ENCODE measurements at regions of chr20 and their contacts with region 1.

Region 1: DNA sequence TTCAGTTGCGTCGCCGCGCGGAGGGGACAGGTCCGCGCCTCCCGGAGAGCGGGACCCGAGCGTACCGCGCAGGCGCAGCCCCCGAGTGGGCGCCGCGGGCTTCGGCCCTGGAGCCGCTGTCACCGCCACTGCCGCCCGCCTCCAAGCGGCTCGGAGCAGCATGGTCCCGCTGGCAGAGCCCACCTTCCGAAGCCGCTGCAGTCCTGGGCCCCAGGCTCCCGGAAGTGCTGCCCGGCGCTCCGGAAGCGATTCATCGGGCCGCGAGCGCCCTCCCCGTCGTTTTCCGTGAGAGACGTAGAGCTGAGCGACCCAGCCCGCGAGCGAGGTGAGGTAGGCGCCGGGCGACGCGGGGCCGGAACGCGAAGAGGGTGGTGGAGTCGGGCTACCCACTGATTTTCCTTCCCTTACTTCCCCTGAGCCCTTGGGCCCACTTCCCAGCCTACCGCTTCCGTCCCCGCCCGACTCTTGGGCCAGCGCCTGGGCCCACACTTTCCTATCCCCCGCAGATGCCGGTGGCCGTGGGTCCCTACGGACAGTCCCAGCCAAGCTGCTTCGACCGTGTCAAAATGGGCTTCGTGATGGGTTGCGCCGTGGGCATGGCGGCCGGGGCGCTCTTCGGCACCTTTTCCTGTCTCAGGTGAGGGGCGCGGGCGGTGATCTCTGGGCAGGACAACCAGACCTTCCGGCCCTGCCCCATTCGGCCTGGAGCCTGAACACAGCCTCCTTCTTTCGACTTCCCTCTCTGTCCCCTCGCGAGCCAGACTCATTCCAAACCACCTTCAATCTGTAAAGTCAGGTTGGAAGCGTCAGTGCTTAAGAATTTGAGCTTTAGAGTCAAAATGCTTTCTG is at the starts of genes NFS1 and ROMO1:
- DNase-seq: peak; percentile 89
- H3K4me3 Mint-ChIP-seq: peak within 1 kb of the TSS; percentile 93
- H3K27ac Mint-ChIP-seq: peak within 1 kb of the TSS; percentile 92
- H3K4me1 Mint-ChIP-seq: peaks cover 40% of the 10 kb centered on the region
- H3K27me3 Mint-ChIP-seq: no peaks in the 10 kb centered on the region
- total RNA-seq, gene NFS1: 33.6 to 38.1 TPM
- total RNA-seq, gene ROMO1: 120 to 134 TPM

Region 2: GRCh38 chr20:35601008-35601973 is 98.1 kb before region 1 on chr20:
- CTCF ChIA-PET with region 1: interaction called, 9 read pairs
- intact Hi-C with region 1: loop called (anchors 1 kb)
- DNase-seq: peak; percentile 91
- H3K4me3 Mint-ChIP-seq: peak overlapping the region; percentile 64
- H3K27ac Mint-ChIP-seq: no peak overlapping the region
- H3K4me1 Mint-ChIP-seq: peaks cover 7% of the 10 kb centered on the region
- H3K27me3 Mint-ChIP-seq: peaks cover 13% of the 10 kb centered on the region

Region 3: GRCh38 chr20:35711588-35712209 is 12.3 kb after region 1 on chr20:
- CTCF ChIA-PET with region 1: no interaction called
- intact Hi-C with region 1: loop called (anchors 1 kb)
- DNase-seq: no peak
- H3K4me3 Mint-ChIP-seq: no peak overlapping the region
- H3K27ac Mint-ChIP-seq: peak overlapping the region; percentile 86
- H3K4me1 Mint-ChIP-seq: peaks cover 46% of the 10 kb centered on the region
- H3K27me3 Mint-ChIP-seq: no peaks in the 10 kb centered on the region

Region 4: GRCh38 chr20:35771689-35772562 is 72.6 kb after region 1 on chr20 and contains the start of gene PHF20:
- CTCF ChIA-PET with region 1: no interaction called
- intact Hi-C with region 1: loop called (anchors 2 kb)
- DNase-seq: peak; percentile 100
- H3K4me3 Mint-ChIP-seq: peak within 1 kb of the TSS; percentile 80
- H3K27ac Mint-ChIP-seq: peak within 1 kb of the TSS; percentile 82
- H3K4me1 Mint-ChIP-seq: peaks cover 74% of the 10 kb centered on the region
- H3K27me3 Mint-ChIP-seq: no peaks in the 10 kb centered on the region
- total RNA-seq, gene PHF20: 39.8 to 46.0 TPM

Region 5: DNA sequence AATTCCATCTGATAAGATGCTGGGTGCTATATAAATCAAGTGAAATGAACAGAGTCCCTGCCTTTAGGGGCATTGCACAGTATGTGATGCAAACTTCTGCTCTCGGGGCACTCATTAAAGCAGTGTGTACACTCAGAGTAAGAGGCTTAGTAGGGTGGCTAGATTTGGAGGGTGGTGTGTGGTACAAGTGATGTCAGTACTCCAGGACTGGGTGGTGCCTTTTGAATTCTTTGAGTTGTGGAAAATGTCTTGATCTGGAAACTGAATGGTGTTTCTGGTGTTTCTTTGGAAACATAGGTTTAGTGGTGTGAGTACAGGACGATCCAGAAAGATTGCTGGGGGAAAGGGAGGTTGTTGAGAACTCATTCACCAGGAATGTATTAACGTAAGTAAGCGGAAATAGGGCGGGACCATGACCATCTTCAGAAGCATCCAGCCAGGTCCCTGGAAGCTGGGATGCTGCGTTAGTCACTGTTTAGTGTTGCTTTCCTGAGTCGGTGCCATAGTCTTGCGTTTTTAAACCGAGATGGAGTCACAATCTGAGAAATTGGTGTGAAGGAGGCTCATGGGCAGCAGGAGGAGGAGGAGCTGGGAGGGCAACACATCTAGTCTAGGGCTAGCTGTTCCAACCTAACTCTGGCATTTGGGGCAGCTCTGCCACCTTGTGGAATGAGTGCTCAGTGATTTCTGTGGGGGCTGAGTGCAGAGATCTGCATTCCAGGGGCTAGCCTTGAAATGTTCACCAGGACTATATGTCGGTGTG is 184.6 kb after region 1 on chr20:
- CTCF ChIA-PET with region 1: no interaction called
- intact Hi-C with region 1: loop called (anchors 1 kb)
- DNase-seq: peak; percentile 82
- H3K4me3 Mint-ChIP-seq: no peak overlapping the region
- H3K27ac Mint-ChIP-seq: no peak overlapping the region
- H3K4me1 Mint-ChIP-seq: peaks cover 10% of the 10 kb centered on the region
- H3K27me3 Mint-ChIP-seq: no peaks in the 10 kb centered on the region